Kidney (tissue), 22 donors: ENCODE measurements at regions of chr1 and their contacts with region 1.

Region 1: DNA sequence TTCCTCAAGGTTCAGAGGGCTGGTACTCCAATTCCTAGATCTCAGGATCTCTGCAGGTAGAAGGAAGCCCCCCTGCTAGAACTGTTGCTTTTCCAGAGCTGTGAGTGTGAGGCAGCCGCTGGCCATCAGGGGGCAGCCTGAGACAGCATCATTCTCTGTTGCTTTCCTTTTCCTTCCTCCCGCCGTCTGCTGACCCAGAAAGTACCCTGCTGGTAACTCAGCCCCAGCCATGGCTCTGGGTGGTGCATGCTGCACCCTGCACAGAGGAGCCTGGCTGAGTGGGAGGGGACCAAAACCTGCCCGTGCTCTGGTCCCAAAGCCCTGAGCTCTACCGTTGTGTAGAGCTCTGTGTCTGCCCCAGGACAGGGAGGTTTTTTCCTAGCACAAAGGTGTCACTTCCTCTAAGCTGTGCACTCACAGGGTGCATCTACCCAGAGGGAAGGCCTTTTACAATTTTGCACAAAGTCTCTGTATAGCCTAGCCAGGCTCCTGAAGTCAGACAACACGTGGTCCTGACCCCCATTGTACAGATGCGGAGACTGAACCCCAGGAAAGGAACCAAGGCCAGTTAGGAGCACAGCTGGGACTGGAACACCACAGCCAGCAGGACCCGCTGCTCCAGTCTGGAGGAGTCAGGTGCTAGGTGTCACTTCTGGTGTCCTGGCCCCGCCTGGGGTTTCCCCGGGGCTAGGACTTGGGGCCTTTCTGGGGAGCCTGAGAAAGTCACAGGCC is 5.6 kb upstream of the FAM131C start:
- DNase-seq: peak; percentile 86 to 90 (median 89)
- H3K4me3 ChIP-seq: peak overlapping the region in 1 of 3 donors; percentile 14
- H3K27ac ChIP-seq: no peak overlapping the region
- H3K4me1 ChIP-seq: peaks cover 0 to 12% (median 6%) of the 10 kb centered on the region in 3 donors
- H3K27me3 ChIP-seq: no peaks in the 10 kb centered on the region
- CTCF ChIP-seq: peak; percentile 91

Region 2: GRCh38 chr1:15966081-15966955 is 112.8 kb before region 1 on chr1:
- intact Hi-C with region 1: no loop called
- DNase-seq: peak in 1 of 5 donors; percentile 66
- H3K4me3 ChIP-seq: peak overlapping the region in 1 of 3 donors; percentile 29
- H3K27ac ChIP-seq: peak overlapping the region; percentile 49 to 55
- H3K4me1 ChIP-seq: peaks cover 0 to 7% (median 2%) of the 10 kb centered on the region in 3 donors
- H3K27me3 ChIP-seq: no peaks in the 10 kb centered on the region
- CTCF ChIP-seq: no peak

Region 3: GRCh38 chr1:16187748-16188401 is 108.8 kb after region 1 on chr1:
- intact Hi-C with region 1: loop called (anchors 5 kb)
- DNase-seq: peak; percentile 75 to 88 (median 87)
- H3K4me3 ChIP-seq: no peak overlapping the region
- H3K27ac ChIP-seq: no peak overlapping the region
- H3K4me1 ChIP-seq: peaks cover 0 to 8% (median 0%) of the 10 kb centered on the region in 3 donors
- H3K27me3 ChIP-seq: no peaks in the 10 kb centered on the region
- CTCF ChIP-seq: peak; percentile 97

Region 4: DNA sequence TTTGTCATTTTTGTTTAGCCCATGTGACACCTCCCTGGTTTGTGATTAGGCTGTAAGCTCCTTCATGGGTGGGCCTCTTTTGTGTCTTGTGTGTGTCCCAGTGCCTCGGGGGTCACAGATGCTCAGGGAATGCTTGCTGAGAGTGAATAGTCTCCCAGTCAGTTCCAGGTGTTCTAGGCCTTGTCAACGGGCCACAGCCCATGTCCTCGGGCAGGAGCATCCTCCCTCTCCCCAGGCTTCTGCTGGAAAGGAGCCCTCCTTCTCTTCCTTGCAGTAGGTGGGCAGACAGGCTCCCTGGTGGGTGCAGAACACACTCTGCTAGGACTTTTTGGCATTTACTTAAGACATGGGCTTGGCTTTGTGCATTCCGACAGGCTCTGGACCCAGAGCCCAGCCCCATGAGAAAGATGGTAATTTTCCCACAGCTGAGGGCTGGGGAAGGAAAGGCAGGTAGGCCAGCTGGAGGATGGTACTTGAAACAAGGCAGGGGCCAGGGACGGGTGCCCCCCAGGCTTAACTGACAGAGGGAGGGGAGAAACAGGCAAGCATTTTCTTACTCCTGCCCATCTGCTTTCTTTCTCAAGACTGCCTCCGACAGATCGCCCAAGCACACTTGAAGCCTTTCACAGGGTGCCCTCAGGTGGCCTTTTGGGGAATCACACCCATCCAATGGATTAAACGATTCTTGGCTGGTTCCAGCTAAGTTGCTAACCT is 165.0 kb after region 1 on chr1:
- intact Hi-C with region 1: loop called (anchors 10 kb)
- DNase-seq: peak; percentile 85 to 94 (median 86)
- H3K4me3 ChIP-seq: no peak overlapping the region
- H3K27ac ChIP-seq: no peak overlapping the region
- H3K4me1 ChIP-seq: peaks cover 0 to 10% (median 9%) of the 10 kb centered on the region in 3 donors
- H3K27me3 ChIP-seq: no peaks in the 10 kb centered on the region
- CTCF ChIP-seq: peak; percentile 89

Region 5: DNA sequence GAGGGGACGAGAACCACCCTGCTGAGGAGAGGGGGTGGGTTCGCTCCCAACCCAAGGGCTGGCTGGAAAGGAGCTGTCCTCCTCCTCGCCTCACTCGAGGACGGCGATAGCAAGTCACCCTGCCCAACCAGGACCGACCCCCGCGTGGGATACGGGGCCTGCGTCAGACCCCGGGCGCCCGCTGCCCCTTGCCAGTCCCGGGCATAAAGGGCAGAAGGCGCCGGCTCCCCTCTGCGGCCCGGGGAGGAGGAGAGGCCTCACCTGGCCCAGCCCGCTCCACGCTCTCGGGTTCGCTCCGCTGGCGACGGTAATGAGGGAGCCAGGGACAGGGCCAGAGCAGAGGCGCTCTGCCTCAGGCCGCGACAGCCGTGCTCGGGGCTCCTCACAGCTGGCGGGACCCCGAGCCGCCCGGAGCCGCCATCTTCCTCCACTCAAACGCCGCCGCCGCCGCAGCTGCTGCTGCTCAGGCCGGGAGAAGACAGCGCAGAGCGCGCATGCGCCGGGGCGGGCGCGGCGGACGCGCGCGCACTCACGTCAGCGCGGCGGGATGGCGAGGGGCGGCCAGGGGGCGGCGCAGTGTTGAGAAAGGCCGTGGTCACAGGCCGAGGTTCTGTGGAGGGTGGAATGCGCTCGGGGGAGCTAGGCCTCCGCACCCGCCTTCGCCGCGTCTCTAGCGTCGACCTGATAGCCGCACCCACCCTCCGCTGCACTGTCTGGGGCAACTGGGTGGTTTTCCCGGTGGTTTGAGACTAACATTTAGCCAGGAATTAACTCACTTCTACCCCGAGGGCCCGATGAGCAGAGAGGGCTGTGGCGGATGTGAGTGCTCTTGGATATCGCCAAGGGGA is 273.1 kb after region 1 on chr1 and contains the start of gene FBXO42:
- intact Hi-C with region 1: loop called (anchors 10 kb)
- DNase-seq: peak; percentile 95 to 98 (median 97)
- H3K4me3 ChIP-seq: peak within 1 kb of the TSS; percentile 84 to 94 (median 93)
- H3K27ac ChIP-seq: peak within 1 kb of the TSS; percentile 90 to 93
- H3K4me1 ChIP-seq: peaks cover 0 to 8% (median 4%) of the 10 kb centered on the region in 3 donors
- H3K27me3 ChIP-seq: no peaks in the 10 kb centered on the region
- CTCF ChIP-seq: peak; percentile 55
- total RNA-seq, gene FBXO42: 22.1 TPM